Activated B cell treated with CpG ODN at 0.5 μM for 24 hours (primary cell): ENCODE measurements at regions of chr15 and their contacts with region 1.

Region 1: DNA sequence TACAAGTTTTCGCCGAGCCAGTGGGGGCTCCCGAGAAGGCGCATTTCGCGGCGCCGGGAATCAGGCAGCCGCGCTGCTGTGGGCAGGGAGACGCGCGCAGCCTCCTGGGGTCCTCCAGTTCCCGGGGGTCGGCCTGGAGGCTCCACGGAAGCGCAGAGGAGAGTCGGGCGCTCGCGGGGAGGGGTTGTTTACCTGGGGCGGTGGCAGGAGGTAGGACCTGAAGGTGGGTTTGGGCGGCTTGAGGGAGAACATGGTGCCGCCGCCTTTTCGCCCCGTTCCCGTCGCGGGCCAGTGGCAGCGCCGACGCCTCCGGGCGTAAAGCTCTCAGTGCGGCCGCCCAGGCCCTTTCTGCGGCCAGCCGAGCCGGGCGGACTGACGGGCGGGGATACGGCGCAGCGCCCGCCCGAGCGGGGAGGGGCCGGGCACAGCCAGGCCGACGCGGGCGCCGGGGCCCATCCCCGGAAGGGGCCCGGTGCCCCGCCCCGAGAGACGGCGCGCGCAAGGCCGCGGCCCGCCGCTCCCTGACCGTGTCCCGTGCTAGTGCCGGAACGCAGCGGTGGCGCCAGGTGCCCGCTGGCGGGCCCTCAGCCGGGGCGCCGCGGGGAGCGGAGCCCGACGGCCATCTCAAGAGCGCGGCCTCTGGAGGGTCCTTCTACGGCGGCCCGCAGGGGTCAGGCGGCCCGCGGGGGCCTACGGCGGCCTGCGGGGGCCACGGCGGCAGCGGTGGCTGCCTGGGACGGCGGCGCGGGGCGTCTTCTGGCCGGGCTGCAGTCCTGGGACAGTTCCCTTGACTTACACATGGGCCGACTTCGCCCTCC is at the start of gene MTMR10:
- DNase-seq: peak; percentile 89
- ATAC-seq: peak; percentile 92
- H3K4me3 Mint-ChIP-seq: peak within 1 kb of the TSS; percentile 94
- H3K27ac Mint-ChIP-seq: peak within 1 kb of the TSS; percentile 94
- H3K4me1 Mint-ChIP-seq: peaks cover 34% of the 10 kb centered on the region
- H3K27me3 Mint-ChIP-seq: no peaks in the 10 kb centered on the region
- CTCF ChIP-seq: no peak
- total RNA-seq, gene MTMR10: 39.3 and 42.5 TPM in 2 replicates

Region 2: GRCh38 chr15:30979457-30979856 is 12.0 kb before region 1 on chr15:
- CTCF ChIA-PET with region 1: interaction called, 4 read pairs
- POLR2A ChIA-PET with region 1: interaction called, 11 read pairs
- intact Hi-C with region 1: no loop called
- DNase-seq: no peak
- ATAC-seq: peak; percentile 42
- H3K4me3 Mint-ChIP-seq: peak overlapping the region; percentile 25
- H3K27ac Mint-ChIP-seq: peak overlapping the region; percentile 62
- H3K4me1 Mint-ChIP-seq: peaks cover 77% of the 10 kb centered on the region
- H3K27me3 Mint-ChIP-seq: no peaks in the 10 kb centered on the region
- CTCF ChIP-seq: no peak

Region 3: GRCh38 chr15:31013538-31014228 is 22.2 kb after region 1 on chr15:
- CTCF ChIA-PET with region 1: interaction called, 4 read pairs
- POLR2A ChIA-PET with region 1: interaction called, 23 read pairs
- intact Hi-C with region 1: loop called (anchors 1 kb)
- DNase-seq: no peak
- ATAC-seq: peak; percentile 97
- H3K4me3 Mint-ChIP-seq: peak overlapping the region; percentile 50
- H3K27ac Mint-ChIP-seq: peak overlapping the region; percentile 86
- H3K4me1 Mint-ChIP-seq: peaks cover 48% of the 10 kb centered on the region
- H3K27me3 Mint-ChIP-seq: no peaks in the 10 kb centered on the region
- CTCF ChIP-seq: no peak

Region 4: DNA sequence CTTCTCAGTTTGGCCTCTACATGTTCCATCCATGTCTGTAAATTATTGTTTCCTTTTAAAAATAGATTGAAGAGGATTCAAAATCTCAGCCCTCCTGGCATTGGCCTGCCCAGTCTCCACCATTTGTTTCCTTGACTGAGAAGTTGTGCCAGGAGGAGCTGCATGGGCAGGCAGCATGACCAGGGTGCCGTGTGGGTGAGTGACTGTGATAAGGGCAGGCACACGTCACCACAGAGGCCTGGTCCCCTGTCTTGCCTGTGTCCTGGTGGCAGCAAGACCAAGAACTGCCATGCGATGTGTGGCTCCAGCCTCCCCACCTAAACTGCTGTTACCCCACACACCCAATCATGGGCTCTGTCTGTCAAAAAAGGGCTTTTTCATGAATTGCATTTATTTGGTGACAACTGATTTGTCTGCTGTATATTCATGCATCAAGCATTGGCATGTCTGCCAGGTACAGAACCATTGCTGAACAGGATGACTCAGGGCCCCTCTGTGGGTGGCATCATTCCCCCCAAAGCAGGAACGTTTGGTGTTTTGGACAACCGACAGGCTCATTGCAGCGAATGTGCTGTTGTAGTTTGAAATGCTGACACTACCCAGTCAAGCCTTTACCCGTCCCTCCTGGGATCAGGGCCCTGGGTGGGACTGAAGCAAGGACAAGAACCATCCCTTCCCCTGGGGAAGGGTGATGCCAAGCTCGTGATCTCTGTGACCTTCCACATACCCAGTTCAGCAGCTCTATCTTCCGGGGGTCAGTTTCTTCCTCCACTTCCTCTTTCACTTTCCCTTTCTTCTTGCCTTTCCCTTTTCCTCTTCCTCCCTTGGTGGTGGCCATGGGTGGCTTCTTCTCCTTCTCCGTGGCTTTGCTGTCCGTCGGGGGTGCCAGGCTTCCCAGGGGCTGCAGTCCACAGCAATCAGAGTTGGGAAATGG is 58.5 kb after region 1 on chr15:
- CTCF ChIA-PET with region 1: no interaction called
- POLR2A ChIA-PET with region 1: interaction called, 8 read pairs
- intact Hi-C with region 1: loop called (anchors 5 kb)
- DNase-seq: no peak
- ATAC-seq: peak; percentile 69
- H3K4me3 Mint-ChIP-seq: peak overlapping the region; percentile 73
- H3K27ac Mint-ChIP-seq: peak overlapping the region; percentile 89
- H3K4me1 Mint-ChIP-seq: peaks cover 69% of the 10 kb centered on the region
- H3K27me3 Mint-ChIP-seq: no peaks in the 10 kb centered on the region
- CTCF ChIP-seq: no peak

Region 5: DNA sequence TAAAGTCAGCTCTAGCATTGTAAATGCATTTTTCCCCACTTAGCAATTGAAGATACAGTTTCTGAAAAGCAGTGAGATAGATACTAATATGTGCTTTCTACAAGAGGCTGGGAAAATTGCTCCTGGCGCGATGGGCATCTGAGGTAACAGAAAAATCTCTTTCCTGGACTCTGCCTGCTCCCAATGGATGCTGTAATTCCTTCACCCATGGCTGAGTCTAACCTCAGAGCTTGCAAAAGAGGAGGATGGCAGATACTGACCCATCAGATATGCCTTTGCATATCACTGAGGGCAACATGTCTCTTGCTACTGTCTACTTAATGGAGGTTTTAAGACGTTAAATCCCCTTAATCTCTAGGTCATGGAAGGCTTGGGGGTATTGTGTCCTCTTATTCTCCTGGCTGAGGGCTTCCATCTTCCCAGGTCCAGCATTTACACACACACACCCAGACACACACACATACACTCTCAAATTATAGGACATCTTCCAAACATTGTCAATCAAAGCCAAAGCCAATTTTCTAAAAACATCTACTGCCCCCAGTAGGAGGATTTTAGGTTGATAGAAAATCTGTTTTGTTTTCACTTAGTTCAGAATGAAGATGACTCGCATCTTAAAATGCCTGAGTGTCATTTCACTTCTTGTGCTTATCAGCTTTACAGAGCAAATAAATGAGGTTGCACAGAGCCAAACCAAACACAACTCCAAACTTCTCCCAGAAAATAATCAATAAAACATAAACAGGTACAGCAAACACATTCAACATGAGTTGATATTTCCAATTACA is 107.7 kb after region 1 on chr15:
- CTCF ChIA-PET with region 1: no interaction called
- POLR2A ChIA-PET with region 1: no interaction called
- intact Hi-C with region 1: loop called (anchors 2 kb)
- DNase-seq: no peak
- ATAC-seq: no peak
- H3K4me3 Mint-ChIP-seq: peak overlapping the region; percentile 47
- H3K27ac Mint-ChIP-seq: peak overlapping the region; percentile 1
- H3K4me1 Mint-ChIP-seq: peaks cover 35% of the 10 kb centered on the region
- H3K27me3 Mint-ChIP-seq: no peaks in the 10 kb centered on the region
- CTCF ChIP-seq: no peak

Region 6: GRCh38 chr15:32942401-32942841 is 1951.0 kb after region 1 on chr15:
- CTCF ChIA-PET with region 1: no interaction called
- POLR2A ChIA-PET with region 1: no interaction called
- intact Hi-C with region 1: no loop called
- DNase-seq: no peak
- ATAC-seq: no peak
- H3K4me3 Mint-ChIP-seq: no peak overlapping the region
- H3K27ac Mint-ChIP-seq: no peak overlapping the region
- H3K4me1 Mint-ChIP-seq: no peaks in the 10 kb centered on the region
- H3K27me3 Mint-ChIP-seq: peaks cover 14% of the 10 kb centered on the region
- CTCF ChIP-seq: no peak